SK-N-SH (cell line): ENCODE measurements at regions of chr14 and their contacts with region 1.

Region 1: GRCh38 chr14:74296037-74296467 is 6.7 kb downstream of the ABCD4 start:
- DNase-seq: no peak
- H3K4me3 ChIP-seq: no peak overlapping the region
- H3K27ac ChIP-seq: no peak overlapping the region
- H3K4me1 ChIP-seq: peaks cover 0 to 2% of the 10 kb centered on the region in 2 experiments; a peak in 1 of 4 replicates
- H3K27me3 ChIP-seq: no peaks in the 10 kb centered on the region
- CTCF ChIP-seq: no peak
- EP300 ChIP-seq: no peak
- RAD21 ChIP-seq: no peak

Region 2: DNA sequence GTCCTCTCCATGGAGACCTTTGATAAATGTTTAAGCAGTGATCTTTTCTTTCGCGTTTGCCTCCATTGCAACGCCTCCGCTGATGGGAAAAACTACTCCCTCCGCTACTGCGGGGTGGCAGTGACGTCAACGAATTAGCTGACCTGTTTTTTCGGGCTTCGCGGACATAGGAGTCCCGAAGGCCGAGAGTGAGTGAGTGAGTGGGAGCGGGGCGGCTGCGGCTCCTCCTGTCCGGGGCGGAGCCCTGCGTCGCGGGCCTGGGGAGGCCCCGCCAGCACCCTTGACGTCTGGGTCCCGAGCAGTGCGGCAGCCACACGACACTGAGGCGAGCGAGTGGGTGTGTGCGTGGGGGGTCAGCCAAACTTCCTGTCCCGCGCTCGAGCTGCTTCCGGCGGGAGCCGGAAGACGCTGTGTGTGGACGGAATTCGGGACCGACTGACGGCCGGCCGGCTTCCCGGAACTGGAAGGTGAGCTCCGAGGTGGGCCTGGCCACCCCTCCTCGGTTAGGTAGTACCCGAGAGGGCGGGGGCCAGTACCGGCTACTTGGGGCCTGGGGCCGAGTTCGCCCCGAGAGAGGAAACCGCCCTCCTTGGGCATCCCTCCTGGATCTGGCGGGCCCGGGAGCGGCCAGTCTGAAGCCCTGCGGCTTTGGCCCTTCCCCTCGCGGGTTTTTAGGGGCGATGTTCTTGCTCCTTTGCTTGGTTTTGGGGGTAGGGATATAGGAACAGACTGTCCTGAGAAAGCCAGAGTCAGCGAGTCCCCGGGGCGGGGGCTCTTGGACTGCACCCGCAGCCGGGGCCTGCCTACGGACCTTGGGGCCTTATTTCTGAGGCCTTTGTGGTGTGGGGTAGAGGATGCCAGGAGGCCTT is 409.4 kb before region 1 on chr14 and contains the start of gene ZNF410:
- CTCF ChIA-PET with region 1: no interaction called
- POLR2A ChIA-PET with region 1: no interaction called
- DNase-seq: peak; percentile 96
- H3K4me3 ChIP-seq: peak within 1 kb of the TSS; percentile 84 to 90
- H3K27ac ChIP-seq: peak within 1 kb of the TSS; percentile 92 to 96
- H3K4me1 ChIP-seq: peaks cover 0 to 3% of the 10 kb centered on the region in 2 experiments; a peak in 3 of 4 replicates
- H3K27me3 ChIP-seq: no peaks in the 10 kb centered on the region
- CTCF ChIP-seq: no peak
- EP300 ChIP-seq: peak; percentile 11 to 15; a peak in 2 of 4 replicates
- RAD21 ChIP-seq: 0 out of 2 replicates have a peak, but pooled peaks have one; percentile 3
- polyA plus RNA-seq, gene ZNF410: 22.8 and 28.7 TPM in 2 replicates

Region 3: GRCh38 chr14:74275241-74275841 is 20.7 kb before region 1 on chr14:
- CTCF ChIA-PET with region 1: interaction called, 15 read pairs
- POLR2A ChIA-PET with region 1: no interaction called
- DNase-seq: no peak
- H3K4me3 ChIP-seq: no peak overlapping the region
- H3K27ac ChIP-seq: no peak overlapping the region
- H3K4me1 ChIP-seq: no peaks in the 10 kb centered on the region
- H3K27me3 ChIP-seq: no peaks in the 10 kb centered on the region
- CTCF ChIP-seq: no peak
- EP300 ChIP-seq: no peak
- RAD21 ChIP-seq: no peak

Region 4: DNA sequence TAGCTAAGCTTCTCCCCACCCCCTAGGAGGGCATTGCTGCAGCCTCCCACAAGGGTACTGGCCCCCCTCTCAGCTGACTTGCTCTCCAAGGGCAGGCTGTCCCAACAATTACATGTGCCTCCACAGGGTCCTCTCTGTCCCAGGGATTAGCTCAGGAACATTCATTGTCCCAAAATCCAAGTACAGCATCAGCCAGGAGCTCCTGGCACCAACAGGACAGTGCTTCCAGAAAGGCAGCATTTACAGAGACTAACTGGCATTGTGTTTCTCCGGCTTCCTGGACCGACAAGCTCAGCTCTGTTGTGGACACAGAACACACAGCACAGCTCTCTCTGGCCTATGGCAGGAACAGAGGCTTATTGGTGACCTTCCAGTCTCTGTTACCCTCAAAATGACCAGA is 15.0 kb before region 1 on chr14:
- CTCF ChIA-PET with region 1: interaction called, 16 read pairs
- POLR2A ChIA-PET with region 1: interaction called, 3 read pairs
- DNase-seq: no peak
- H3K4me3 ChIP-seq: no peak overlapping the region
- H3K27ac ChIP-seq: no peak overlapping the region
- H3K4me1 ChIP-seq: no peaks in the 10 kb centered on the region
- H3K27me3 ChIP-seq: no peaks in the 10 kb centered on the region
- CTCF ChIP-seq: no peak
- EP300 ChIP-seq: no peak
- RAD21 ChIP-seq: no peak